ENCODE measurements at regions of chr5 and their contacts with region 1.

Region 1: GRCh38 chr5:138542956-138543729 is at the start of gene ETF1:
- DNase-seq: peak; percentile 100
- ATAC-seq: peak; percentile 89
- H3K4me3 Mint-ChIP-seq: peak within 1 kb of the TSS; percentile 97
- H3K27ac Mint-ChIP-seq: peak within 1 kb of the TSS; percentile 100
- H3K4me1 Mint-ChIP-seq: peaks cover 66% of the 10 kb centered on the region
- H3K27me3 Mint-ChIP-seq: no peaks in the 10 kb centered on the region
- total RNA-seq, gene ETF1: 92.2 to 134 TPM

Region 2: DNA sequence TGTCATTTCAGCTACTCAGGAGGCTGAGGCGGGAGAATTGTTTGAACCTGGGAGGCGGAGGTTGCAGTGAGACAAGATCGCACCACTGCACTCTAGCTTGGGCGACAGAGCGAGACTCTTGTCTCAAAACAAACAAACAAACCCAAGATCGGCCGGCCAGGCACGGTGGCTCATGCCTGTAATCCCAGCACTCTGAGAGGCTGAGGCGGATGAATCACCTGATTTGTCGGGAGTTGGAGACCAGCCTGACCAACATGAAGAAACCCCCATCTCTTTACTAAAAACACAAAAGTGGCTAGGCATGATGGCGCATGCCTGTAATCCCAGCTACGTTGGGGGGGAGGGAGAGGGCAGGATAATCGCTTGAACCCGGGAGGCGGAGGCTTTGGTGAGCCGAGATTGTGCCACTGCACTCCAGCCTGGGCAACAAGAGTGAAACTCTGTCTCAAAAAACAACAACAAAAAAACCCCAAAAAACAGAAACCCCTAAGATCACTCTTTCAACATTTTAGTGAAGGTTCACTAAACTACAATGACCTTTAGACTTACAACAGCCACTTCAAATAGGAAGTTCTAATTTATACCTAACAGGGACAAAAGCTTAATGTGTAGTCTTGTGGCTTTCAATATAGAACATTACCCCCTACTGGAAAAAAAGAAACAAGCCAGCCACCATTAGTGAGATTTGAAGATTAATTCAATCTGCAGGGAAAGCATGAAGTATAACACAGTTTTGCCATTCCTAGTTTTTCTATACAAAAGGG is 25.1 kb after region 1 on chr5:
- CTCF ChIA-PET with region 1: interaction called, 16 read pairs
- DNase-seq: no peak
- ATAC-seq: no peak
- H3K4me3 Mint-ChIP-seq: no peak overlapping the region
- H3K27ac Mint-ChIP-seq: peak overlapping the region; percentile 65
- H3K4me1 Mint-ChIP-seq: peaks cover 76% of the 10 kb centered on the region
- H3K27me3 Mint-ChIP-seq: no peaks in the 10 kb centered on the region

Region 3: GRCh38 chr5:138575194-138576015 is 32.3 kb after region 1 on chr5 and contains the start of gene HSPA9:
- CTCF ChIA-PET with region 1: interaction called, 18 read pairs
- DNase-seq: peak; percentile 99
- ATAC-seq: peak; percentile 90
- H3K4me3 Mint-ChIP-seq: peak within 1 kb of the TSS; percentile 93
- H3K27ac Mint-ChIP-seq: peak within 1 kb of the TSS; percentile 98
- H3K4me1 Mint-ChIP-seq: peaks cover 35% of the 10 kb centered on the region
- H3K27me3 Mint-ChIP-seq: no peaks in the 10 kb centered on the region
- total RNA-seq, gene HSPA9: 208 to 309 TPM

Region 4: GRCh38 chr5:138632900-138633489 is 89.9 kb after region 1 on chr5:
- CTCF ChIA-PET with region 1: no interaction called
- DNase-seq: no peak
- ATAC-seq: peak; percentile 49
- H3K4me3 Mint-ChIP-seq: no peak overlapping the region
- H3K27ac Mint-ChIP-seq: no peak overlapping the region
- H3K4me1 Mint-ChIP-seq: peaks cover 3% of the 10 kb centered on the region
- H3K27me3 Mint-ChIP-seq: peaks cover 34% of the 10 kb centered on the region

Region 5: GRCh38 chr5:138760448-138761110 is 217.4 kb after region 1 on chr5:
- CTCF ChIA-PET with region 1: no interaction called
- DNase-seq: no peak
- ATAC-seq: no peak
- H3K4me3 Mint-ChIP-seq: no peak overlapping the region
- H3K27ac Mint-ChIP-seq: peak overlapping the region; percentile 17
- H3K4me1 Mint-ChIP-seq: peaks cover 30% of the 10 kb centered on the region
- H3K27me3 Mint-ChIP-seq: no peaks in the 10 kb centered on the region

Measured in activated CD8-positive, alpha-beta memory T cell treated with anti-CD3 and anti-CD28 coated beads, Interleukin-2, amount 10 ng/mL, durations not matched to agents 7 days and 5 days (primary cell).